Gastrocnemius medialis (tissue), 4 donors: ENCODE measurements at regions of chr7 and their contacts with region 1.

Region 1: GRCh38 chr7:129741743-129742213 is 130.3 kb downstream of the NRF1 start:
- DNase-seq: peak in 1 of 2 donors; percentile 31
- ATAC-seq: peak; percentile 3 to 12
- H3K4me3 ChIP-seq: no peak overlapping the region
- H3K27ac ChIP-seq: peak overlapping the region; percentile 85 to 93 (median 89)
- H3K4me1 ChIP-seq: peaks cover 44 to 48% of the 10 kb centered on the region in 2 donors
- H3K27me3 ChIP-seq: no peaks in the 10 kb centered on the region
- CTCF ChIP-seq: peak in 1 of 5 experiments; percentile 21
- POLR2A ChIP-seq: no peak

Region 2: DNA sequence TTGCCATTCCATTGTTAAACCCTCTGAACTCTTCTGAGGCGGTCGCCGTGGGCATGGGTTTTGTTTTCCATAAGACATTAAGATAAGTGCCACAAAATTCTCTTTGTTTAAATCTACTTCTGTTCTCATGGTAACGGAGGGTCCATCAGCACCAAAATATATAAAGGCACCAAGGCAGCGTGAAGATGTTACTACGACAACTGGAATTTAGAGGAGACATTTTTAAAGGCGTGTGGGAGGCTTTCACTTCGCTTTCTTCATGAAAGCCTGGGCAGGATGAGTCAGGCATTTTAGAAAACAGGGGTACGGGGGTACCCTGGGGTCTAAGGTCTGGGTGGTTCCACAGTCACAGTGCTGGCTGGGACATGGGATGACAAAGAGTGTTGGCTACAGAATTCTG is 205.5 kb before region 1 on chr7:
- in situ Hi-C with region 1: no loop called
- intact Hi-C with region 1: no loop called
- DNase-seq: no peak
- ATAC-seq: no peak
- H3K4me3 ChIP-seq: no peak overlapping the region
- H3K27ac ChIP-seq: no peak overlapping the region
- H3K4me1 ChIP-seq: no peaks in the 10 kb centered on the region
- H3K27me3 ChIP-seq: no peaks in the 10 kb centered on the region
- CTCF ChIP-seq: no peak
- POLR2A ChIP-seq: no peak

Region 3: DNA sequence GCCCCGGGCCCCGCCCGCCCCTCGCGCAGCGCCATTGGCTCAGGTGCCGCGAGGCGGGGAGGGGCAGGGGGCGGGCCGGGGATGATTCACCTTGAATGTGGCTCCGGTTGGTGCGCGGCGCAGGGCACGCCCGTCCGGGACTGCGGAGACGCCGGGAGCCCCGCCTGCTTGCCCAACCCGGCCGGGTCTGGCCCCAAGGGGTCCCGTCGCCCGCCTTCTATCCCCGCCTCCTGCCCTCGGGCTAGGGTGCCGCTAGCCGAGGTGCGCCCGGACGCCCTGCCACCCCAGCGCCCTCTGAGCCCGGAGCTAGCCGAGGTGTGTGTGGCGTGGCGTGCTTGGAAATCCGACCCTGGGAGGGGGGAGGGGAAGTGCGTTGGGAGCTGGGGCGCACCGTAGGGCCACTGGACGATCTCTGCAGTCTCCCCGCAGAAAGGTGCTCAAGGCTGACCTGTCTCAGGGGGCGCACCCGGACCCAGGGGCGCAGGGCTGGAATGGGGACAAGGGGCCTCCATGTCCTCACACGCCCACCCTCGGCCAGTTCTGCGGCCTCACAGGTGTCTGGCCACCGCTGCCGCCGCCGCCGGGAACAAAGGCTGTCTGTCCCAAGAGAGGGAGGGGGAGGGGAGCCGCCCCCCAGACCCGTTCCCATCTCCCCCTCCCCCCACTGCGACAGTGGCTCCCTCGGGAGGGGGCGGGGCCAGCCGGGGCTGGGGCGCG is 38.6 kb after region 1 on chr7:
- in situ Hi-C with region 1: no loop called
- intact Hi-C with region 1: loop called (anchors 2 kb)
- DNase-seq: peak; percentile 37 to 57
- ATAC-seq: peak; percentile 51 to 63
- H3K4me3 ChIP-seq: peak overlapping the region; percentile 53 to 85 (median 56)
- H3K27ac ChIP-seq: no peak overlapping the region
- H3K4me1 ChIP-seq: peaks cover 29 to 34% of the 10 kb centered on the region in 2 donors
- H3K27me3 ChIP-seq: peaks cover 77 to 83% (median 80%) of the 10 kb centered on the region in 3 donors
- CTCF ChIP-seq: no peak
- POLR2A ChIP-seq: no peak

Region 4: DNA sequence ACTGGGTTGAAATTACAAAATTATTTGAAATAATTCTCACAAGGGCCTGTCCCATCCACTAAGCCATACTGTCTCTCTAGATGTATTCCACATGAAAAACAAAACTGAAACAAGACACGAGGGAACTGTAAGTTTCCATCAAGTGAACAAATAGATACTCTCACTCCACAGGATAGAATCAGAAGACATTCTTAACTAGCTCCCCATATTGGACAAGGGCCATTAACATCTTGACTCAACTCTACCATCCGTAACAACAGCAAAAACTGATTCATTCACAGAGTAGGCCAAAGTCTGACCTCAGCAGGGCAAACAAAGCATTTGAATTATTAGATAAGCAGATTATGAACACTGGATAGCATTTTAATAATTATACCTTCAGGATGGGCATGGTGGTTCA is 181.9 kb after region 1 on chr7:
- in situ Hi-C with region 1: no loop called
- intact Hi-C with region 1: no loop called
- DNase-seq: no peak
- ATAC-seq: peak; percentile 32 to 76
- H3K4me3 ChIP-seq: no peak overlapping the region
- H3K27ac ChIP-seq: peak overlapping the region; percentile 29 to 80 (median 65)
- H3K4me1 ChIP-seq: peaks cover 55 to 58% of the 10 kb centered on the region in 2 donors
- H3K27me3 ChIP-seq: no peaks in the 10 kb centered on the region
- CTCF ChIP-seq: no peak
- POLR2A ChIP-seq: no peak

Region 5: DNA sequence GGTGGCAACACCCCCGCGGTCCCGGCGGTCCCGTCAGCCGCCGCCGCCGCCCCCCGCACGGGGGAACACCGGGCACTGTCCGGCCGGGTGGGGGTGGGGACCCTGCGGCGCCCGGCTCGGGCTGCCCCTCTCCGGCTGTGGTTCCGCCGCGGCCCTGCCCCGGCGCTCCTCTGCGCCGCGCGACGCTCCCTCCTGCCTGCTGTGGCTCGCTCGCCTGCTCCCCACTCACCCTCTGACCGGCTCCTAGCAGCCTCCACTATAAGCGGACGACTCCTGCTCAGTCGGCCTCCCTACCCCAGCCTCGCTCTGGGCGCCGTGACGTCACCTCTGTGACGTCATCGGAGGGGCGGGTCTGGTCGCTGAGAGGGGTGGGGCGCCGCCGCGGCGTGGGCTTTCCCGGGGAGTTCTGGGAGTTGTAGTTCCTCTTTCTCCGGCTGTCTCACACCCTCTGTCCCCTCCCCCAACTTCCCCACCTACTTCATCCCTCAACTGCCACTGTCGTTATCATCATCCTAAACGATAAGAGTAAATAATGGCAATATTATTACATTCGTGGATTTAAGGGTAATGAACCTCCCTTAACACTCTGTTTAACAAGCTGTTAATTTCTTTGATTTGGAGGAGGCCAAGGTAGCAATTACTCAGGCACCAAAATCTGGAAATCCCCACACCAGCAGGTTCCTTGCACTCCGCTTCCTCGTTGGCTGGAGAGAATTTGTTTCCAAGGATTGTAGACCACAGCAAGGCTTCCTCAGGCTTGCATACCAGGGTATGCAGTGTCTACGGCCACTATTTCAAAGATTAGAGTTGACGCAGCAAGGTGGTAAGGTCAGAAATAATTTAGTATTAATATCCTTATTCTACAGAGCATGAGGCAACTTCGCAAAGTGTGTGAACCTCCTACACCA is 211.1 kb after region 1 on chr7 and contains the start of gene UBE2H:
- in situ Hi-C with region 1: no loop called
- intact Hi-C with region 1: loop called (anchors 5 kb)
- DNase-seq: peak; percentile 88 to 90
- ATAC-seq: peak; percentile 71 to 76
- H3K4me3 ChIP-seq: peak within 1 kb of the TSS; percentile 81 to 97 (median 86)
- H3K27ac ChIP-seq: peak within 1 kb of the TSS; percentile 92 to 99 (median 99)
- H3K4me1 ChIP-seq: peaks cover 18 to 23% of the 10 kb centered on the region in 2 donors
- H3K27me3 ChIP-seq: no peaks in the 10 kb centered on the region
- CTCF ChIP-seq: peak in 2 of 5 experiments; percentile 8 to 25
- POLR2A ChIP-seq: peak; percentile 98 to 100
- total RNA-seq, gene UBE2H: 82.7 to 162 (median 103) TPM

Region 6: DNA sequence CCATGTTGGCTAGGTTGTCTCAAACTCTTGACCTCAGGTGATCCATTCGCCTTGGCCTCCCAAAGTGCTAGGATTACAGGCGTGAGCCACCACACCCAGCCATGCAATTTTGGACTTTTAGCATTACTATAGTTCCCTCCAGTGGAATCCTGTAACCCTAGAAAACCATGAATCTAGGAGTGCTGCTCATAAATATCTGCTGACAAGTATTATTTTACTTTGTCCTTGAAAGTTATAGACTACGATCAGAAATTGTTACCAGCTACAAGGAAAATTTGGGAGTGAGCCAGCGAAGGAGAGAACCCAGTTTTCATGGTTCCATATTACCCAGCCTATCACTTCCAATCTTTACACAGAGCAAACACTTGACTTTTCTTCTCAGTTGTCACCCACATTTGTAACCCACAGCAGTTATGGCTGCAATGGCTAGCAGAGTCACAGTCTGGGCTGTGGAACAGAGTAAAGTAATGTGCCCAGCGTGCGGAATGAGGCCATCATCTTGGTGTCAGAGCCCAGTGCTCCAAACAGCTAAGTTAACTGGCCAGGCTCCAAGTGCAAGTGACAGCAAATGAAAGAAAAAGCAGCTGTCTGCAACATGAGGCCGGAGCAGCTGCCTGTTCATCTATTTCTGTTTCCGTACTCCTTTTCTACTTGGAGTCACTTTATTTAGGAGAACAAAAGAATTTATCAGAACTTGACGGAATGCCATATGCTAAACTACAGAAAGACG is 279.5 kb after region 1 on chr7:
- in situ Hi-C with region 1: no loop called
- intact Hi-C with region 1: loop called (anchors 5 kb)
- DNase-seq: peak; percentile 92 to 95
- ATAC-seq: peak; percentile 83 to 86
- H3K4me3 ChIP-seq: peak overlapping the region in 3 of 4 donors; percentile 11 to 34 (median 22)
- H3K27ac ChIP-seq: peak overlapping the region; percentile 89 to 98 (median 97)
- H3K4me1 ChIP-seq: peaks cover 28 to 33% of the 10 kb centered on the region in 2 donors
- H3K27me3 ChIP-seq: no peaks in the 10 kb centered on the region
- CTCF ChIP-seq: no peak
- POLR2A ChIP-seq: peak in 1 of 2 donors; percentile 29